ENCODE measurements at regions of chr9 and their contacts with region 1.

Region 1: DNA sequence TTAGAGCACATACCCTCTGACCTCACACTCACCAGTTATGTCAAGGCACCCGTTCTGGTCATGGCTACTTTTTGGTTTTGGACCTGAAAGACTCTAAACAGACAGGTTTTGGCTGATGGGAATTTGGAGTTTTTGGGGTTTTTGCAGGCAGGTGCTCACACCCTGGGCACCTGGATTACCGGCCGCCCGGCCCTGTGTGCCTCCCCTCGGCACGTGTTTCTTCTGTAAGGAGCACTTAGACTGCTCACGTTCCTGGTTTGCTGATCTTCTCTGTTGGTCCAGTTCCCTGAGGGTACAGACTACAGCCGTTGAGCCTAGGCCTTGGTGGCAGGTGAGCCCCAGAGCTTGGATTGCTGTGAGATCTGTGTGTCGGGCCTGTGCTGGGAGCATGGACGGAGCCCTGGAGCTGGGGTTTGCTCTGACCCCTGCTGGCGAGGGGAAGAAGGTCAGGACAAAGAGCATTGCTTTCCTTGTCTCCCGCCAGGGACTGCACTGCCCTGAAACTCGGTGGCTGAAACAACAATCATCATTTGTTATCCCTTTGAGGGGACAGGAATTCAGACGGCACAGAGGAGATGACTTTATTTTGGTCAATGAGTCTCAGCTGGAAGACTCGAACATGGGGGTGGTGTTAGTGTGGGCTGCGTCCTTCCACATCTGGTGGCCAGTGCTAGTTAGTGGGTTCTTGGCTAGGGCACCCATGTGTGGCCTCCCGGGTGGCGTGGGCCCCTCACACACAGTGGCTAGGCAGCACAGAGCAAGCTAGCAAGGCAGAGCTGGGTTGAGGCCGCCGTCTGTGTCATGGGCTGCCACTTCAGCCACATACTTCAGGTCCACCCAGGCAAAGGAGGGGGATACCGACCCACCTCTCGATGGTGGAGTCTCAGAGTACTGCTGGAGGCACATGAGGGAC is 76.4 kb downstream of the EHMT1 start:
- DNase-seq: peak; percentile 44

Region 2: GRCh38 chr9:137582286-137582860 is 112.8 kb before region 1 on chr9:
- in situ Hi-C with region 1: loop called (anchors 5 kb)
- DNase-seq: peak; percentile 16

Region 3: DNA sequence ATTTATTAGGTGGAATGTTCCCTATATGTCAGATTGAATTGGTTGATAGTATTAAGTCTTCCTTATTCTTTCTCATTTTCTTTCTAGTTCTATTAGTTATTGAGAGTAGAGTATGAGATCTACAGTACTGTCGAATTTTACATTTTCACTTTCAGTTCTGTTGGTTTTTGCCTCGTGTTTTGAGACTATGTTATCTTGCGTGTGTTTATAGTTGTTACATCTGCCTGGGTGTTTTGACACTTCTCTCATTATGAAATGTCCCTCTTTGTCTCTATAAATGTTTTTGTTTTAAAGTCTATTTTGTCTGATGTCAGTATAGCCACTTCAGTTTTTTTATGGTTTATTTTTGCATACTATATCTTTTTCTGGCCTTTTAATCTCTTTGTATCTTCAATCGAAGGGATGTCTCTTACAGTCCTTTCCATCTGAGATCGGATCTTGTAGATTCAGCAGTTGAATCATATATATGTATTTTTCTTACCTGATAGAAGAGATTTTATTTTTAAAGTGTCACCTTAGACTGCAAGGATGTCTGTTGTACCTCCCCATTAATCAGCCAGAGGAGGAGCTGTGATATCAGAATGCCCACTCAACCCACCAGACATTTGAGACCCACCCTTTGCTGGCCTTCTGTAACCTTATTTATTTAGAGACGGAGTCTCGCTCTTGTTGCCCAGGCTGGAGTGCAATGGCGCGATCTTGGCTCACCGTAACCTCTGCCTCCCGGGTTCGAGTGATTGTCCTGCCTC is 55.7 kb before region 1 on chr9:
- in situ Hi-C with region 1: no loop called
- DNase-seq: no peak

Measured in G401 (cell line).